Activated CD4-positive, alpha-beta memory T cell treated with anti-CD3 and anti-CD28 coated beads for 36 hours (primary cell): ENCODE measurements at regions of chr1 and their contacts with region 1.

Region 1: DNA sequence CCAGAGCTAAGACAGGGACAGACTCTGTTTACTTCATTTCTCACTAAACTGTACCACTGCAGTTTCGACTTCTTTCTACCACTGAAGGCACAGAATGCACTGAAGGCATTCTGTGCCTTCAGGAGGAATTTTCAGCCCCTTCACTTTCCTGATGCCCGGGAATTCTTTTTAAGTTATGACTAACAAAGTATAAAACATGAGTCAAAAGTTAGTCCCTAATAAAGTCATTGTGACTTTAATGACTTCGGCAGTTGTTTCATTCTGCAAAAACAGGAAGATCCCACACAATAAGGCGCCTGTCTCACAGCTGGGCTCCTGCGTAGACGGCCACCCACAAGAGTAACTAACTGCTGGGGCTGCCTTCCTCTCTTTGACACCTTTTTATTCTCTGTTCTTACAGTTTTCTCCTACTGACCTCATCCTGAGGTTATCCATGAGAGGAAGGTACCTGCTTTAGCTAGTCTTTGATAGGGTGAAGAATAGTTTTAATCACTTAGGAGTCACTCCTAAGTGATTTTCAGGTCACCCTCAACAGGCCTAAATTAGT is 183.9 kb upstream of the SGIP1 start:
- DNase-seq: peak; percentile 77
- H3K4me3 Mint-ChIP-seq: peak overlapping the region; percentile 65
- H3K27ac Mint-ChIP-seq: peak overlapping the region; percentile 83
- H3K4me1 Mint-ChIP-seq: peaks cover 93% of the 10 kb centered on the region
- H3K27me3 Mint-ChIP-seq: no peaks in the 10 kb centered on the region

Region 2: GRCh38 chr1:66258404-66259105 is 91.5 kb before region 1 on chr1:
- CTCF ChIA-PET with region 1: interaction called, 17 read pairs
- POLR2A ChIA-PET with region 1: interaction called, 8 read pairs
- intact Hi-C with region 1: loop called (anchors 1 kb)
- DNase-seq: no peak
- H3K4me3 Mint-ChIP-seq: no peak overlapping the region
- H3K27ac Mint-ChIP-seq: peak overlapping the region; percentile 64
- H3K4me1 Mint-ChIP-seq: peaks cover 85% of the 10 kb centered on the region
- H3K27me3 Mint-ChIP-seq: no peaks in the 10 kb centered on the region

Region 3: DNA sequence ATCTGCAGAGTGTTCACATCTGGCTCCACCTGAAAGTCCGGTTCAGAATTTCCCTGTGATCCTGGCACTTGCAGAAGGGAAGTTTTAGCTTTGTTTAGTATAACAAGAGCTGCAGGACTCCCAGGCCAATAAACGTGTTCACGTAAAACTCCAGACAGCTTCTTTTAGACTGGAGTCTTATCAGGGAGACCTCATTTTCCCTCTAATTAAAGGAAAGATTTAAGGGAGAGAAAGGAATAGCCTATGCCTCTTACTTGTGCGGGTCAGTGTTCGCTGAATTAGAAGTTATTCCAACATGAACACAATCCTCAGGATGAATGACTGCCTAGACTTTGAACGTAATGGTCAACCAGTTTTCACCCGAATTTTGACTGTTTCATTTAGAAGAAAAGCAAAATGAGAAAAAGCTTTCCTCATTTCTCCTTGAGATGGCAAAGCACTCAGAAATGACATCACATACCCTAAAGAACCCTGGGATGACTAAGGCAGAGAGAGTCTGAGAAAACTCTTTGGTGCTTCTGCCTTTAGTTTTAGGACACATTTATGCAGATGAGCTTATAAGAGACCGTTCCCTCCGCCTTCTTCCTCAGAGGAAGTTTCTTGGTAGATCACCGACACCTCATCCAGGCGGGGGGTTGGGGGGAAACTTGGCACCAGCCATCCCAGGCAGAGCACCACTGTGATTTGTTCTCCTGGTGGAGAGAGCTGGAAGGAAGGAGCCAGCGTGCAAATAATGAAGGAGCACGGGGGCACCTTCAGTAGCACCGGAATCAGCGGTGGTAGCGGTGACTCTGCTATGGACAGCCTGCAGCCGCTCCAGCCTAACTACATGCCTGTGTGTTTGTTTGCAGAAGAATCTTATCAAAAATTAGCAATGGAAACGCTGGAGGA is 18.2 kb before region 1 on chr1:
- CTCF ChIA-PET with region 1: interaction called, 41 read pairs
- POLR2A ChIA-PET with region 1: interaction called, 108 read pairs
- intact Hi-C with region 1: loop called (anchors 1 kb)
- DNase-seq: peak; percentile 75
- H3K4me3 Mint-ChIP-seq: peak overlapping the region; percentile 93
- H3K27ac Mint-ChIP-seq: peak overlapping the region; percentile 96
- H3K4me1 Mint-ChIP-seq: peaks cover 48% of the 10 kb centered on the region
- H3K27me3 Mint-ChIP-seq: no peaks in the 10 kb centered on the region

Region 4: GRCh38 chr1:66365635-66366034 is 15.6 kb after region 1 on chr1:
- CTCF ChIA-PET with region 1: interaction called, 19 read pairs
- POLR2A ChIA-PET with region 1: interaction called, 28 read pairs
- intact Hi-C with region 1: loop called (anchors 1 kb)
- DNase-seq: no peak
- H3K4me3 Mint-ChIP-seq: no peak overlapping the region
- H3K27ac Mint-ChIP-seq: peak overlapping the region; percentile 52
- H3K4me1 Mint-ChIP-seq: peaks cover 78% of the 10 kb centered on the region
- H3K27me3 Mint-ChIP-seq: no peaks in the 10 kb centered on the region

Region 5: GRCh38 chr1:66446261-66447001 is 96.4 kb after region 1 on chr1:
- CTCF ChIA-PET with region 1: interaction called, 33 read pairs
- POLR2A ChIA-PET with region 1: interaction called, 3 read pairs
- intact Hi-C with region 1: no loop called
- DNase-seq: peak; percentile 23
- H3K4me3 Mint-ChIP-seq: peak overlapping the region; percentile 6
- H3K27ac Mint-ChIP-seq: peak overlapping the region; percentile 86
- H3K4me1 Mint-ChIP-seq: peaks cover 21% of the 10 kb centered on the region
- H3K27me3 Mint-ChIP-seq: peaks cover 4% of the 10 kb centered on the region